ENCODE measurements at regions of chr20 and their contacts with region 1.

Region 1: DNA sequence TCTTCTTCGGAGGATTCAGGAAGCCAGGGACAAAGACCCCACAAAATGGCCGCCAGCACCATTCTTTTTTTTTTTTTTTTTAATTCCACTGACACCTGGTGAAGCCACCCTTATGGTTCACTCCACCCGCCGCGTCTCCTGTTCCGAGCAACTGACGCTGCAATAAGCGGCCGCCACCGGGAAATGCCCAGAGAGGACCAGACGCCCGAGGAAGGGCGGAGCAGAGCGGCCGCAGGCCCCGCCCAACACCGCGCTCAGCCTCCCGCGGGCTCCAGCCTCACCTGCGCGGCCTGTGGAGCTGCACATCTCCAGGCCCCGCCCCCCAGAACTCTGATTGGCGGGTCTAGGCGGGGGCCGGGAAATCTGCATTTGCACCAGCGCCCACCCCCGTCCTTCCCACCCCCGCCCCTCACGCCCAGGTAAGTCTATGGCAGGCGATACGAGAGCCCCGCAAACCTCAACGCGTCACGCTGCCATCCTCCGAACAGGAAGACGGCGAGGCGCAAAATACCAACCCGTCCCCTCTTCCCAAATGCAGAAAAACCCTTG is 1.1 kb downstream of the ATP9A start:
- DNase-seq: peak; percentile 78 to 94
- H3K4me3 ChIP-seq: peak overlapping the region; percentile 99
- H3K27ac ChIP-seq: peak overlapping the region; percentile 68
- H3K4me1 ChIP-seq: peaks cover 12% of the 10 kb centered on the region
- H3K27me3 ChIP-seq: no peaks in the 10 kb centered on the region
- CTCF ChIP-seq: no peak

Region 2: GRCh38 chr20:51687062-51687461 is 80.0 kb before region 1 on chr20:
- CTCF ChIA-PET with region 1: no interaction called
- POLR2A ChIA-PET with region 1: no interaction called
- intact Hi-C with region 1: loop called (anchors 1 kb)
- DNase-seq: peak; percentile 80 to 85
- H3K4me3 ChIP-seq: no peak overlapping the region
- H3K27ac ChIP-seq: peak overlapping the region; percentile 91
- H3K4me1 ChIP-seq: peaks cover 15% of the 10 kb centered on the region
- H3K27me3 ChIP-seq: no peaks in the 10 kb centered on the region
- CTCF ChIP-seq: no peak

Region 3: DNA sequence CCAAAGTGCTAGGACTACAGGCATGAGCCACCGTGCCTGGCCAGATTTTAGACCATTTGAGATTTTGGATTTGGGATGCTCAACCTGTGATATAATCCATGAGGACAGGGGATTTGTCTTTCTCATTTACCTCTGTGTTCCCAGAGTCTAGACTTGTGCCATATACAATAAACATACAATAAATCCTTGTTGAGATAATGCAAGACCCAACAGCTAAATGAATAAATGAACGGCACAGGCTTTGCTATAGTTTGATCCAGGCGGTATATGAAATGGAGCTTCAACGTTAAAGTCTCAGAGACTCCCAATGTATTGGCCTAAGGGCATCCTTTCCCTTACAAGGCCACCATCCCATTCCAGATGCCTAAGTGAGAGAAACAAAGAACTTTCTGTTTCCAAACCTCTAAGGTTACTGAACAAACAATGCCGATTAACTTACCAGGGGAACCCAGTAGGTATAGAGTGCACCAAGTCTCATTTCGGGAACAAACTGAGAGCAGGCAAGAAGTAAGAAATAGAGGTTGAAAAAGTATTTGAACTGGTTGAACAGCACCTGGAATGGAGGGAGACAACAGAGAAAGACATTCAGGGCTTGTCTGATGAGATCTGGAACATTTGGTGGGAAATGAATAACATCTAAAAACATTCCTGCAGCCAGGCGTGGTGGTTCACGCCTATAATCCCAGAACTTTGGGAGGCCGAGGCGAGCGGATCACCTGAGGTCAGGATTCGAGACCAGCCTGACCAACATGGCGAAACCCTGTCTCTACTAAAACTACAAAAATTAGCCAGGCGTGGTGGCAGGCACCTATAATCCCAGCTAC is 41.5 kb before region 1 on chr20:
- CTCF ChIA-PET with region 1: no interaction called
- POLR2A ChIA-PET with region 1: no interaction called
- intact Hi-C with region 1: loop called (anchors 2 kb)
- DNase-seq: peak; percentile 41 to 97
- H3K4me3 ChIP-seq: no peak overlapping the region
- H3K27ac ChIP-seq: peak overlapping the region; percentile 83
- H3K4me1 ChIP-seq: peaks cover 28% of the 10 kb centered on the region
- H3K27me3 ChIP-seq: no peaks in the 10 kb centered on the region
- CTCF ChIP-seq: no peak

Region 4: DNA sequence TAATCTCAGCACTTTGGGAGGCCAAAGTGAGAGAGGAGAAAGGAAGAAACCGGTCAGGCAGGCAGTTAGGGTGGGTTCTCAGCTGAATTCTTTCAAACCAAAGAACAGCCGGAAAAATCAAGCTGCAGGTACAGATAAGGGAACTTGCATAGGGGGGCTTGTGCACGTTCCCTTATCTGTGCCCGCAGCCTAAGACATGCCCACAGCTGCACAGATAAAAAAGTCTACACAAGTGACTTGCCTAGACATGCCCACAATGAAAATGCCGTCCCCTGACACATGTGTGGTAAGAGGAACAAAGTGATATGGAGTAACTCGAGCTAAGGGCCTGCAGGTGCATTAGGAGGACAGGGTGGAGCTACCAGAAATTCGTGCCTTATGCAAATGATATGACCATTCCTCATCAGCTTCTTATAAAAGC is 211.0 kb after region 1 on chr20:
- CTCF ChIA-PET with region 1: no interaction called
- POLR2A ChIA-PET with region 1: no interaction called
- intact Hi-C with region 1: no loop called
- DNase-seq: no peak
- H3K4me3 ChIP-seq: no peak overlapping the region
- H3K27ac ChIP-seq: no peak overlapping the region
- H3K4me1 ChIP-seq: no peaks in the 10 kb centered on the region
- H3K27me3 ChIP-seq: no peaks in the 10 kb centered on the region
- CTCF ChIP-seq: no peak

Region 5: DNA sequence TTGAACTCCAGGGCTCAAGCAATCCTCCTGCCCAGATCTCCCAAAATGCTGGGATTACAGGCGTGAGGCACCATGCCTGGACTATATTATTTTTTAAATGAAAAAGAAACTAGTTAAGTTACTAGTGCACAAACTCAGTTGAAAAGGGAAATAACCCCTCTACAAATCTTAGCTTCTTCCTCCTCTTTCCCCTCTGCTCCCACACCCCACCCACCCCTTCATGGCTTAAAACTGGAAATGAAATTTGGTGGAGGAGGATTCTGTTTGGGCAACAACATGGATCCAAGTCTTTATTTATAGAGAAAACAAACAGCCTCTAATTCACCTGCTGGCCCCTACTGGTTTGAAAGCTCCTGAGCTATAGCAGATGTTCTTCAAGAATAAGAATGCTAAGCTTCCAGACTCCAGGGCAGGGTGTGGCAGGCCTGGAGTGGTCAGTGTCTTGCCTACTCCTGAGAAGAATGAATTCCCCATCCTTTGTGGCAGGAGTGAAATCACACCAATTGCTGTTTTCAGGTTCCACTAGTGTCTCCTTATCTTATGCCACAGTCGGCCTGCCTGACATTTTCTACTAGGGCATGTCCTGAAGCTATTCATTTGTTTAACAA is 351.0 kb after region 1 on chr20:
- CTCF ChIA-PET with region 1: no interaction called
- POLR2A ChIA-PET with region 1: interaction called, 32 read pairs
- intact Hi-C with region 1: no loop called
- DNase-seq: peak in 1 of 2 experiments; percentile 8
- H3K4me3 ChIP-seq: no peak overlapping the region
- H3K27ac ChIP-seq: no peak overlapping the region
- H3K4me1 ChIP-seq: no peaks in the 10 kb centered on the region
- H3K27me3 ChIP-seq: no peaks in the 10 kb centered on the region
- CTCF ChIP-seq: no peak

Region 6: DNA sequence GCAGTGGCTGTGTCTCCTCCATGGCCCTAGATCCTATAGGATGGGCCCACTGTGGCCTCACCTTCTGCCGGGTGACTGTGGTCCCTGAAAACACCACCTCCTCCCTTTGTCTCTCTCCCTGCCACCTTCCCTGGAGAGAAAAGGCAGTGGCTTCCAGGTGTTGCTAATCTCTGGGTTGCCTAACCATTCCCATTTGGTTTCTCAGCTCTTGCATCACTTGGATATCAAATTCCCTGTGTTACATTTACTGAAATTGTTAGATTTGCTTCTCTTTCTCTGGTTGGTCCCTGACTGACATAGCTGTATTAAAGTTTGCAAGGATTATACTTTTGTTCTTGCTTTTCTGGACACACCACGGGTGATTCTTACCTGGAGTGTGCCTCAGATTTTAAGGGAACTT is 433.8 kb after region 1 on chr20:
- CTCF ChIA-PET with region 1: no interaction called
- POLR2A ChIA-PET with region 1: no interaction called
- intact Hi-C with region 1: no loop called
- DNase-seq: no peak
- H3K4me3 ChIP-seq: no peak overlapping the region
- H3K27ac ChIP-seq: 0 out of 2 replicates have a peak overlapping the region, but pooled peaks have one; percentile 20
- H3K4me1 ChIP-seq: no peaks in the 10 kb centered on the region; the same call in 1 of the 2 replicates
- H3K27me3 ChIP-seq: no peaks in the 10 kb centered on the region
- CTCF ChIP-seq: no peak

Measured in PC-9 (cell line).